Activated CD4-positive, alpha-beta T cell treated with anti-CD3 and anti-CD28 coated beads for 36 hours (primary cell): ENCODE measurements at regions of chr12 and their contacts with region 1.

Region 1: DNA sequence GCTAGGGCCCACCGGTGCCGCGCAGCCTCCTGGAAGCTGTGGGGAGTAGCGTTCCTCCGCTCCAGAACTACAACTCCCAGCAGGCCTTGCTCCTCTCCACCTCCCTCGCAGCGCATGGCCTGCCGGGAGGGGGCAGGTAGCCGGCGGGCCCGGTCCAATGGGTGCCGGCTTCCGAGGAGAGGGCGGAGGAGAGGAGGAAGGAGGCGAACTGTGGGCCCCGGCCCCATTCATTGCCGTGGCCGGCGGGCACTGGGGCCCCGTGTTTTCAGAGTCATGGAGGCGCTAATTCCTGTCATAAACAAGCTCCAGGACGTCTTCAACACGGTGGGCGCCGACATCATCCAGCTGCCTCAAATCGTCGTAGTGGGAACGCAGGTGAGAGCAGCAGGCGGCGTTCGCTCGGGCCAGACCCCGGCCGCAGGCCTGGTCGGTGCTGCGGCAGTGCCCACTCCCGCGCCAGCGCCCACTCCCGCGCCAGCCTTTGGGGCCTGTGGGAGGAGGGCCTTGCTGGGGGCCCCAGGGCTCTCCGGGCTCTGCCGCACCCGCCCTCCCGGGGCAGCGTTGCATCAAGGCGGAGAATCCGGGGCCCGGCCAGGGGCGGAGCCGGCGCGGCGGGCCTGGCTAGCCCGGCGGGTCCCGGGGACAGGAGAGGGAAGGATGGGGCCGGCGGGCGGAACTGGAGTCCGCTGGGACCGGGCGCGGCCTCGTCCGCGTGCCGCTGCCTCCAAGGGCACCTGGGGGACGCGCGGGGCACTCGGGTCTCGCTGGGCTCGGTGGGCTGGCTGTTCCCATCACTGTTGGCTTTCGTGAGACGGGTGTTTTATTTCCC is at the start of gene DNM1L:
- DNase-seq: peak; percentile 96
- ATAC-seq: peak; percentile 99
- H3K4me3 Mint-ChIP-seq: peak within 1 kb of the TSS; percentile 84
- H3K27ac Mint-ChIP-seq: peak within 1 kb of the TSS; percentile 89
- H3K4me1 Mint-ChIP-seq: peaks cover 21% of the 10 kb centered on the region
- H3K27me3 Mint-ChIP-seq: no peaks in the 10 kb centered on the region
- total RNA-seq, gene DNM1L: 67.1 to 68.5 TPM

Region 2: DNA sequence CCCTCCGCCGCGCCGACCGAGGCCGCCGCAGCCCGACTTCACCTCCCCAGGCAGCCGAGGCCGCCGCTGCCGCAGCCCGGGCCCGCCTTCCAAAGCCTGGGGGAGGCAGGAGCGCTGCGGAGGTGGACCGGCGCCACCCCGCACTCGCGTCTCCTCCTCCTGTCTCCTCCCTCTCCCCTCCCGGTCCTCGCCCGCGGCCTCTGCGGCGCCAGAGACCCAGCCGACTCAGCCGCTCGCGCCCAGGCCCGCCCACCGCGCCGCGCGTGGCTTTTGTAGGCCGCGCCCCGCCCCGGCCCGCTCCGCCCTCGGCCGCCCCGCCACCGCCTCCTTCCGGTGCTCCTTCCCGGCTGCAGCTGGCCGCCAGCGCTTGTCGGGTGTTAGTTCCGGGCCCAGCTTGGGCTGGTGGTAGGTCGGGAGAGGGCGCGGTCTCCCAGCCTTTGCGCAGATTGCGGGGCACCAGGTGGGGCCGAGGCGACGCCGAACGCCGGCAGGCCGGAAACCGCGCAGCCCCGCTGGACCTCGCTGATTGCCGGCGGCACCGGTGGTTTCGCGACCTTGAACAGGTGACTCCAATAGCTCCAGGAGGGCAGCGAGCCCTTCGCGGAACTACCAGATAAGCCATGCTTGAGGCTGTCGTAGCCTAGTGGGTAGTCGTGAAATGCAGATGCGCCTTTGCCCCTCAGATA is 1924.5 kb before region 1 on chr12 and contains the start of gene CAPRIN2:
- CTCF ChIA-PET with region 1: no interaction called
- POLR2A ChIA-PET with region 1: no interaction called
- intact Hi-C with region 1: loop called in 1 of 2 experiments (anchors 5 kb)
- DNase-seq: peak; percentile 96
- ATAC-seq: peak; percentile 94
- H3K4me3 Mint-ChIP-seq: peak within 1 kb of the TSS; percentile 86
- H3K27ac Mint-ChIP-seq: peak within 1 kb of the TSS; percentile 78
- H3K4me1 Mint-ChIP-seq: peaks cover 36% of the 10 kb centered on the region
- H3K27me3 Mint-ChIP-seq: no peaks in the 10 kb centered on the region
- total RNA-seq, gene CAPRIN2: 10.0 to 19.8 TPM

Region 3: GRCh38 chr12:31659087-31659933 is 1020.0 kb before region 1 on chr12 and contains the start of gene ETFBKMT:
- CTCF ChIA-PET with region 1: no interaction called
- POLR2A ChIA-PET with region 1: no interaction called
- intact Hi-C with region 1: loop called (anchors 1 to 2 kb)
- DNase-seq: peak; percentile 96
- ATAC-seq: peak; percentile 99
- H3K4me3 Mint-ChIP-seq: peak within 1 kb of the TSS; percentile 87
- H3K27ac Mint-ChIP-seq: peak within 1 kb of the TSS; percentile 100
- H3K4me1 Mint-ChIP-seq: peaks cover 13% of the 10 kb centered on the region
- H3K27me3 Mint-ChIP-seq: no peaks in the 10 kb centered on the region
- total RNA-seq, gene ETFBKMT: 0.35 to 1.4 TPM

Region 4: DNA sequence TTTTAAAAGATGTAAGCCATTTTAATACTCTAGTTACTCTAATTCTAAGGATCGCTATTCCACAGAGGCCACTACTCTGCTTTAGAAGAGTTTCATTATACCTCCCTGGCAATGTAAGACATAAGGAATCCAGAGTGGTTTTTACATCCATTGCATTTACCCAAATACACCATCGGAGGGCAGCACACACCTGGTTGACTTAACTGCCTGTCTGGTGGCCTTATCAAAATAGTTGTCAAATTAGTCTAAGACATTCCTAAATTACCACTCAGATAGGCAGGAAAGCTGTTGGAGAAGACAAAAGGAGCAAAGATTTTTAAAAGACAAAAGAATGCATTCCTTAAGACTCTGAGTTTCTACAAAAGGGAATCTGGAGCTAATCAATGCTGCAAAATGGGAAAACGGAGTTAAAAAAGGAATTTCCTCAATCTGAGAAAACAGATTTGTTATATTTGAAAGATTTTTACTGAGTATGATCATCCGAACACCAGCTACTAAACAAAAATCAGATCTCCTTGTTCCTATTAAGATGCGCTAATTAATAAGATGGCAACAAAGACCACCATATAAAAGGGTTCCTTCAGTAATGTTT is 313.7 kb before region 1 on chr12:
- CTCF ChIA-PET with region 1: interaction called, 5 read pairs
- POLR2A ChIA-PET with region 1: no interaction called
- intact Hi-C with region 1: loop called (anchors 2 to 10 kb)
- DNase-seq: peak; percentile 64
- ATAC-seq: peak; percentile 49
- H3K4me3 Mint-ChIP-seq: no peak overlapping the region
- H3K27ac Mint-ChIP-seq: no peak overlapping the region
- H3K4me1 Mint-ChIP-seq: no peaks in the 10 kb centered on the region
- H3K27me3 Mint-ChIP-seq: no peaks in the 10 kb centered on the region

Region 5: GRCh38 chr12:32399337-32400113 is 279.8 kb before region 1 on chr12 and contains the start of gene FGD4:
- CTCF ChIA-PET with region 1: no interaction called
- POLR2A ChIA-PET with region 1: no interaction called
- intact Hi-C with region 1: loop called in 1 of 2 experiments (anchors 10 kb)
- DNase-seq: peak; percentile 77
- ATAC-seq: peak; percentile 95
- H3K4me3 Mint-ChIP-seq: peak within 1 kb of the TSS; percentile 80
- H3K27ac Mint-ChIP-seq: no peak within 1 kb of the TSS
- H3K4me1 Mint-ChIP-seq: peaks cover 6% of the 10 kb centered on the region
- H3K27me3 Mint-ChIP-seq: peaks cover 40% of the 10 kb centered on the region
- total RNA-seq, gene FGD4: 0.07 TPM in 1 of 2 experiments, not detected in the other

Region 6: DNA sequence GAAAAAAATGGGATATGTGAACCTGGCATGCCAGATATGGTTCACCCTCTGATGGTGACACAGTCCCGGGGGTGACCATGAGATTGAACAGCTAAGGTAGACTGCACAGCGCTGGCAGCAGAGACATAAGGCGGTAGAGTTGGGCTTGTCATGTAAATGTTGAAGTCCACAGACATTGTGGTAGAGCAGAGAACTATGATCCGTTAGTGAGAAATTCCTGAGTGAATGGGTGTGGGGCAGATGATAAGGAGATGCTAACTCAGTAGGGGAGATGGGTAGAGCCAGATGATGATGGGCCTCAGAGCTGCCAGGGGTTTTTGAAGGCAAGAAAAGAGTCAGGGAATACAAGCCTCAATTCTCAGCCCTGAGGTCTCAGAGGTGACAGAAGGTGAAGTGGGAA is 51.3 kb before region 1 on chr12:
- CTCF ChIA-PET with region 1: no interaction called
- POLR2A ChIA-PET with region 1: no interaction called
- intact Hi-C with region 1: no loop called
- DNase-seq: no peak
- ATAC-seq: no peak
- H3K4me3 Mint-ChIP-seq: no peak overlapping the region
- H3K27ac Mint-ChIP-seq: no peak overlapping the region
- H3K4me1 Mint-ChIP-seq: no peaks in the 10 kb centered on the region
- H3K27me3 Mint-ChIP-seq: peaks cover 3% of the 10 kb centered on the region

Region 7: GRCh38 chr12:32743264-32743663 is 64.0 kb after region 1 on chr12:
- CTCF ChIA-PET with region 1: no interaction called
- POLR2A ChIA-PET with region 1: no interaction called
- intact Hi-C with region 1: loop called in 1 of 2 experiments (anchors 5 kb)
- DNase-seq: no peak
- ATAC-seq: peak; percentile 47
- H3K4me3 Mint-ChIP-seq: no peak overlapping the region
- H3K27ac Mint-ChIP-seq: no peak overlapping the region
- H3K4me1 Mint-ChIP-seq: peaks cover 16% of the 10 kb centered on the region
- H3K27me3 Mint-ChIP-seq: no peaks in the 10 kb centered on the region

Region 8: GRCh38 chr12:34022079-34022830 is 1343.0 kb after region 1 on chr12 and contains the start of gene ALG10:
- CTCF ChIA-PET with region 1: no interaction called
- POLR2A ChIA-PET with region 1: no interaction called
- intact Hi-C with region 1: loop called (anchors 1 to 2 kb)
- DNase-seq: peak; percentile 97
- ATAC-seq: peak; percentile 100
- H3K4me3 Mint-ChIP-seq: peak within 1 kb of the TSS; percentile 96
- H3K27ac Mint-ChIP-seq: peak within 1 kb of the TSS; percentile 98
- H3K4me1 Mint-ChIP-seq: peaks cover 27% of the 10 kb centered on the region
- H3K27me3 Mint-ChIP-seq: no peaks in the 10 kb centered on the region
- total RNA-seq, gene ALG10: 22.6 to 25.1 TPM